ENCODE measurements at regions of chr15 and their contacts with region 1.

Region 1: GRCh38 chr15:77075528-77075927 is 4.6 kb upstream of the TSPAN3 start:
- DNase-seq: peak; percentile 57
- H3K4me3 ChIP-seq: no peak overlapping the region
- H3K27ac ChIP-seq: no peak overlapping the region
- H3K4me1 ChIP-seq: peaks cover 6% of the 10 kb centered on the region
- H3K27me3 ChIP-seq: peaks cover 6% of the 10 kb centered on the region
- CTCF ChIP-seq: peak in 1 of 2 donors; percentile 26

Region 2: GRCh38 chr15:76533995-76534536 is 541.5 kb before region 1 on chr15:
- CTCF ChIA-PET with region 1: no interaction called
- dilution Hi-C with region 1: no loop called
- in situ Hi-C with region 1: no loop called
- intact Hi-C with region 1: no loop called
- DNase-seq: no peak
- H3K4me3 ChIP-seq: no peak overlapping the region
- H3K27ac ChIP-seq: no peak overlapping the region
- H3K4me1 ChIP-seq: no peaks in the 10 kb centered on the region
- H3K27me3 ChIP-seq: no peaks in the 10 kb centered on the region
- CTCF ChIP-seq: no peak

Region 3: DNA sequence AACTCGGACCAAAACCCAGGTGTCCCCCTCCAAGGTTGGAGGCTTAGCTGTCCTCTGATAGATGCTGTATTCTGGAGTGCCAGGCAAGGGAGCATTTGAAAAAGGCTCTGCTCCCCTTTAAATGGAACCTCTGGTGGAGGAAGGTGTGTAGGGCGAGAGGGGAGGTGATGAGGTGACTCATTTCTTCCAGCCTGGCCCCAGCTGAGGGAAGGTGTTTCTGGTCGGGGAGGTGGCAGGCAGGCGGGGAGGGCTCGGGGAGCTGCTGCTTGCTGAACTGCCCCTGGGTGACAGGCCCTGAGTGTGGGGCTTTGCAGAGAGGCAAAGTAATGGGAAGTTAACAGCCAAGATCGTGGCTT is 61.8 kb before region 1 on chr15:
- CTCF ChIA-PET with region 1: no interaction called
- dilution Hi-C with region 1: no loop called
- in situ Hi-C with region 1: no loop called
- intact Hi-C with region 1: no loop called
- DNase-seq: peak; percentile 30
- H3K4me3 ChIP-seq: no peak overlapping the region
- H3K27ac ChIP-seq: no peak overlapping the region
- H3K4me1 ChIP-seq: no peaks in the 10 kb centered on the region
- H3K27me3 ChIP-seq: no peaks in the 10 kb centered on the region
- CTCF ChIP-seq: no peak

Region 4: DNA sequence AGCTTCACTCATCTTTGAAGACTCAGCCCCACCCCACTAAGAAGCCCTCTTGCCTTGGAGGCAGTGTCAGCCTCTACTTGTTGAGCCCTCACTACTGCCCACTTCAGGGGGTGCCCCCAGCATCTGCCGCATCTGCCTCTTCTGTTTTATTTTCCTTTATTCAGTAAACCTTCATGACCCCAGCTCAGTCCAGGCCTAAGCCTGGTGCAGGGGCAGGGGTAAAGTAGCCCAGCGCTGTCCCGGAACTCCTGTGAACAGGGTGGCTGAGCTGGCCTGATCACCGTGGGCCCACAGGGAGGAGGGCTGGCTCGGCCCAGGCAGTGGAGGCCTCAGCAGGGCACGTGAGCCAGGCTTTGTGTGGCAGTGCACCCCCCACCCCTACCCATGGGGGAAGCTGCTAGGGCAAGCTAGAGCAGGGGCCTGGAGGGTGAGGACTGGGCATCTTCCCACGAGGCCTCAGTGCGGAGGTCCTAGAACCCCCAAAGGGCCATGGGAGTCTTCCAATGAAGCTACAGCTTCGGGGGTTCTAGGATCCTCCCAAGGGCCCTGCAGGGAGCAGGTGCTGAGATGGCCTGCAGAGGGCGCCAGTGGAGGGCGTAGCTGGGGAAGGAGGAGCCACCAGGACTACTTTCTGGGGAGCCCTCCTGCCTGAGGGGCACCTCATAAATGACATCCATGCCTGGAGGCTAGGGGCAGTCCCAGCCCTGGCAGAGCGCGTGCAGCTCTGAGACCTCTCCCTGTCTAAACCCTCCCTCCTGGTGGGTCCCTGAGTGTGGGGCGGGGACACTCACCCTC is 40.6 kb before region 1 on chr15:
- CTCF ChIA-PET with region 1: no interaction called
- dilution Hi-C with region 1: no loop called
- in situ Hi-C with region 1: no loop called
- intact Hi-C with region 1: loop called (anchors 5 kb)
- DNase-seq: no peak
- H3K4me3 ChIP-seq: no peak overlapping the region
- H3K27ac ChIP-seq: no peak overlapping the region
- H3K4me1 ChIP-seq: no peaks in the 10 kb centered on the region
- H3K27me3 ChIP-seq: no peaks in the 10 kb centered on the region
- CTCF ChIP-seq: peak; percentile 38 to 55

Measured in mammary epithelial cell (primary cell).